Heart right ventricle (tissue), 16 donors: ENCODE measurements at regions of chr3 and their contacts with region 1.

Region 1: GRCh38 chr3:12841149-12841970 is at the start of gene RPL32:
- DNase-seq: peak; percentile 84 to 92
- ATAC-seq: peak; percentile 91 to 98 (median 96)
- H3K4me3 ChIP-seq: peak within 1 kb of the TSS; percentile 63 to 98 (median 86)
- H3K27ac ChIP-seq: peak within 1 kb of the TSS; percentile 77 to 99 (median 94)
- H3K4me1 ChIP-seq: peaks cover 2 to 45% (median 38%) of the 10 kb centered on the region in 9 donors
- H3K27me3 ChIP-seq: no peaks in the 10 kb centered on the region
- CTCF ChIP-seq: peak; percentile 79 to 93 (median 82)
- total RNA-seq, gene RPL32: 827 to 1,102 (median 884) TPM

Region 2: DNA sequence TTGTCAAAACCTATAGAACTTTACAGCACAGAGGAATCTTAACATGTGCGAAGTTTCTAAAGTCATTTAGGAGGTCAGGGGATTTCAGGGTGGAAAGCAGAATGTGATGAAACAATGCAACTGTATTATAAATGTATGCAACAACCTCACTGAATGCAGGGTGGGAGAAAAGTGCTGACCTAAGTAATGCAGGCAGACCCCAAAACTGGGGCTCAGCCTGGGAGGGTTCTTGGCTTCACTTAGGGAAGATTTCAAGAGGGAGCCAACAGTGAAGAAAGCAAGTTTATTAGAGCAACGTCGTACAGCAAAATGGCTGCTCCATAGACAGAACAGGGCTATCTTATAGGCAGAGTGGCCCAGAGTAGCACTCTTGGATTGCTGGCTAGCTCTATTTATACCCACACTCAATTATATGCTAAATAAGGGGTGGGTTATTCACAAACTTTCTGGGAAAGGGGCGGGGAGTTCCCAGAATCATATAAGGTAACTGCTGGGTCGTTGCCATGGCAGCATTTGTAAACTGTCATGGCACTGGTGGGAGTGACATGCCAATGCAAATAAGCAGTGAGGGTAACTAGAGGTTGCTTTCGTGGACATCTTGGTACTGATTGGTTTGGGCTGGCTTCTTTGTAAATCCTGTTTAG is 59.1 kb before region 1 on chr3:
- intact Hi-C with region 1: loop called in 1 of 10 experiments (anchors 2 kb)
- DNase-seq: no peak
- ATAC-seq: peak in 6 of 8 donors; percentile 20 to 88 (median 68)
- H3K4me3 ChIP-seq: no peak overlapping the region
- H3K27ac ChIP-seq: no peak overlapping the region
- H3K4me1 ChIP-seq: no peaks in the 10 kb centered on the region
- H3K27me3 ChIP-seq: no peaks in the 10 kb centered on the region
- CTCF ChIP-seq: no peak

Region 3: DNA sequence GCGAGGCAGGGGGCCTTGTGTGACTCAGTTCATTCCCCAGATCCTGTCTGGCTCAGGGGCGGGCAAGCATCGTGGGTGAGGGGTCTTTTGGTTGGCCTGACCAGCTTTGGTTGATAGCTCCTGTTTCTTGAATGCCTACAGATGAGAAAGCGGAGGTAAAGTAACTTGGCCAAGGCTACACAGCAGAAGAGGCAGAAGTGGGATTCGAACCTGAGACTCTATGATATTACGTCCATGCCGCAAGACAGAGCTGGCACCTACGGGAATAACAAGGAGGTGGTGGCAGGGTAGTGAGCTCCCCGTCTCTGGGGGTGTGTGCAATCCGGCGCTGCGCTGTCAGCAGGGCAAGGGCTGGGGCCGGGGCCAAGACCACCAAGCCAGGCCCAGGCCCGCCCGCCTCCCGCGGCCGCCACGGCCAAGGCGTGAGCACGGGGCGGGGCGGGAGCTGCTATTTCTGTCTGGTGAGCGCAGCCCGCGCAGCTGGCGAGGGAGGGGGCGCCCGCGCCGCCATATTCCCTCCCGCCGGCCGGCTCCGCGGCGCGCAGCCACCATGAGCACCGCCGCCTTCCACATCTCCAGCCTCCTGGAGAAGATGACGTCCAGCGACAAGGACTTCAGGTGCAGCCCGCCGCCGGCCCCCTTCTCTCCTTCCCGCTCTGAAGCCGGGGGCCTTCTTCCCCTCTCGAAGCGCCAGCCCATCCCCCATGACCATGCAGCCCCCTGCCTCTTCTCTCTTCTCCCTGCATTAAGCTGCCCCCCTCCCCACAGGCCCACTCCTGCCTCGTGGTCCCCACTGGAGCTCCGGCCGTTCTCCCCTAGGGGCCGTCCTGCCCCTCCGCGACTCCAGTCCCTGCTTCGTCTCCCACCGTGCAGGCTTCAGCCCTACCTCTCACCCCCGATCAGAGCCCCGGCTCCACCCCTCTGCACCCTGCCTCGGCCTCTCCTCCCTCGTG is 44.9 kb before region 1 on chr3 and contains the start of gene CAND2:
- intact Hi-C with region 1: loop called in 2 of 10 experiments (anchors 5 to 10 kb)
- DNase-seq: peak; percentile 75 to 78
- ATAC-seq: peak; percentile 87 to 93 (median 90)
- H3K4me3 ChIP-seq: peak within 1 kb of the TSS; percentile 54 to 83 (median 76)
- H3K27ac ChIP-seq: peak within 1 kb of the TSS; percentile 9 to 96 (median 91)
- H3K4me1 ChIP-seq: peaks cover 0 to 47% (median 15%) of the 10 kb centered on the region in 9 donors
- H3K27me3 ChIP-seq: peaks cover 0 to 19% (median 0%) of the 10 kb centered on the region in 7 donors
- CTCF ChIP-seq: no peak
- total RNA-seq, gene CAND2: 46.9 to 99.0 (median 68.4) TPM

Region 4: GRCh38 chr3:12810013-12810780 is 31.2 kb before region 1 on chr3:
- intact Hi-C with region 1: loop called in 1 of 10 experiments (anchors 1 kb)
- DNase-seq: peak; percentile 96 to 97
- ATAC-seq: peak; percentile 97 to 99 (median 99)
- H3K4me3 ChIP-seq: peak overlapping the region; percentile 34 to 73 (median 58)
- H3K27ac ChIP-seq: peak overlapping the region in 9 of 10 donors; percentile 39 to 79 (median 70)
- H3K4me1 ChIP-seq: peaks cover 7 to 46% (median 18%) of the 10 kb centered on the region in 9 donors
- H3K27me3 ChIP-seq: no peaks in the 10 kb centered on the region
- CTCF ChIP-seq: peak; percentile 49 to 97 (median 81)